ENCODE measurements at regions of chr12 and their contacts with region 1.

Region 1: GRCh38 chr12:14618983-14619382 is 51.3 kb upstream of the PLBD1 start:
- DNase-seq: no peak
- ATAC-seq: no peak
- H3K4me3 ChIP-seq: no peak overlapping the region
- H3K27ac ChIP-seq: no peak overlapping the region
- H3K4me1 ChIP-seq: peaks cover 23% of the 10 kb centered on the region
- H3K27me3 ChIP-seq: no peaks in the 10 kb centered on the region
- CTCF ChIP-seq: 0 out of 6 replicates have a peak, but pooled peaks of 1 of the 3 experiments have one; percentile 16
- EP300 ChIP-seq: no peak
- POLR2A ChIP-seq: no peak
- RAD21 ChIP-seq: peak; percentile 48

Region 2: DNA sequence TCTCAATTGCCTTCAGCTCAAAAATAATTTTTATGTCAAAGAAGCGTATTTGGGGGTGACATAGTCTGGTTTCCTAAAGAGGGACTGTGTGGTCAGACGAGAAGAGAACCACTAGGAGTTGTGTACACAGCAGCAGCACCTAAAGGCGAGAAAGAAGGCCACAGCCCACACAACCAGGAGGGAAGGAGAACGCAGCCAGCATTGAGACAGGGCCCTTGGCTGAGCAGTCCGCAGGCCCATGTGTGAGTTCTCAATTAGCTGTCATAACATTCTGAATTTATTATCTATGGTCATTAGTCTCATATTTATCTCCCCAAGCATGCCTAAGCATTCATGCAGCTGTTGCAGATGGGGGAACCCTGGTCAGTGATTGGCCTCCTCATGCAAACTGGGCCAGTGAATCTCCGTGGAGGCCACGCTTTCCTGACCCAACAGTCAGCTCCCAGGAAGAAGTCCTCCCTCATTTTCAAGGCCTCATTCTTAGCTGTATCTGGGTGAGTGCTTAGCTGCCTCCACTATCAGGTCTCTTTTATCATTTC is 334.7 kb before region 1 on chr12:
- CTCF ChIA-PET with region 1: no interaction called
- POLR2A ChIA-PET with region 1: no interaction called
- RAD21 ChIA-PET with region 1: no interaction called
- SMC1A ChIA-PET with region 1: interaction called, 3 read pairs
- in situ Hi-C with region 1: no loop called
- intact Hi-C with region 1: loop called (anchors 5 kb)
- DNase-seq: peak; percentile 40
- ATAC-seq: peak; percentile 86
- H3K4me3 ChIP-seq: peak overlapping the region; percentile 51; the same call in 1 of the 2 replicates
- H3K27ac ChIP-seq: peak overlapping the region; percentile 98
- H3K4me1 ChIP-seq: peaks cover 29% of the 10 kb centered on the region
- H3K27me3 ChIP-seq: no peaks in the 10 kb centered on the region
- CTCF ChIP-seq: 0 out of 6 replicates have a peak, but pooled peaks of 1 of the 3 experiments have one; percentile 18
- EP300 ChIP-seq: no peak
- POLR2A ChIP-seq: peak; percentile 72
- RAD21 ChIP-seq: peak; percentile 53

Measured in GM12878 (cell line).